IMR-90 (cell line): ENCODE measurements at regions of chr6 and their contacts with region 1.

Region 1: GRCh38 chr6:4319981-4320683 is 184.8 kb upstream of the ECI2 start:
- DNase-seq: peak; percentile 65
- ATAC-seq: peak; percentile 8
- H3K4me3 ChIP-seq: no peak overlapping the region
- H3K27ac ChIP-seq: peak overlapping the region; percentile 78; the same call in 1 of the 2 replicates
- H3K4me1 ChIP-seq: peaks cover 24% of the 10 kb centered on the region
- H3K27me3 ChIP-seq: no peaks in the 10 kb centered on the region
- CTCF ChIP-seq: no peak
- POLR2A ChIP-seq: no peak
- RAD21 ChIP-seq: no peak

Region 2: DNA sequence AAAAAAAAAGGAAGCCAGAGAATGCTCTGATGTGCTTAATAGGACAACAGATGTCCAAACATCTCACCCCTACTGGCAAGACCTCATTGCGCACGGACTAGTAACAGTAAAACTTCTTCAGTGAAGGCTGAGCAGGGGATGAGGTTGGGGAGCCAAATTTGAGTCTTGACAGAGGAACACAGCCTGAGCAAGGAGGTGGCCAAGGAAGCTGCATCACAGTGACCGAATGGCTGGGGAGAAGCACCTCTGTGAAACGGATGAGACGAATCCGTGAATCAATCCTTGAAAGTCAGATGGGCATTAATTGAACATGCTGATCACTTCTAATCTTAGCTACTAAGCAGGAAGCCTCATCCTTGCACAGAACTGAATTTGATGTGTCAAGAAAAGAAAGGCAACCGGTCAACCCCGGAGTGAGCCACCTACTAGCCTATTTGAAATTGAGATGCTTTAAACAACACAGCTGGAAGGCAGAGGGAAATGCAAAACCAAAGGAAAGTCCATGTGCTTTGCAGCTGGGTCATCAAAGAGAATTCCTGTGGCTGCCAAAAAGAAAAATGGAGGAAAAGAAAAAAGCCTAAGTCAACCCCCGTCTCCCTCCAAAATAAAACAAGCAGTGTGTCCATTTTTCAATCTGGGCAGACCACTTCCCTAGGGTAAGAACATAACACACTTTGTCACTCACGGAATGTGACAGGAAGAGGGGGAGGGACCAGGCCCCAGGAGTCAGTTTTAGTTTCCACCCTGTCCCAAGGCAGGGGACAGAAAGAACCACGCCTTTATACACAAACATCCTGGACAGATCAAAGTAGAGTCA is 598.1 kb before region 1 on chr6:
- CTCF ChIA-PET with region 1: no interaction called
- POLR2A ChIA-PET with region 1: no interaction called
- dilution Hi-C with region 1: no loop called
- in situ Hi-C with region 1: no loop called
- intact Hi-C with region 1: no loop called
- DNase-seq: peak; percentile 51
- ATAC-seq: no peak
- H3K4me3 ChIP-seq: no peak overlapping the region
- H3K27ac ChIP-seq: no peak overlapping the region
- H3K4me1 ChIP-seq: no peaks in the 10 kb centered on the region
- H3K27me3 ChIP-seq: no peaks in the 10 kb centered on the region
- CTCF ChIP-seq: no peak
- POLR2A ChIP-seq: no peak
- RAD21 ChIP-seq: no peak

Region 3: DNA sequence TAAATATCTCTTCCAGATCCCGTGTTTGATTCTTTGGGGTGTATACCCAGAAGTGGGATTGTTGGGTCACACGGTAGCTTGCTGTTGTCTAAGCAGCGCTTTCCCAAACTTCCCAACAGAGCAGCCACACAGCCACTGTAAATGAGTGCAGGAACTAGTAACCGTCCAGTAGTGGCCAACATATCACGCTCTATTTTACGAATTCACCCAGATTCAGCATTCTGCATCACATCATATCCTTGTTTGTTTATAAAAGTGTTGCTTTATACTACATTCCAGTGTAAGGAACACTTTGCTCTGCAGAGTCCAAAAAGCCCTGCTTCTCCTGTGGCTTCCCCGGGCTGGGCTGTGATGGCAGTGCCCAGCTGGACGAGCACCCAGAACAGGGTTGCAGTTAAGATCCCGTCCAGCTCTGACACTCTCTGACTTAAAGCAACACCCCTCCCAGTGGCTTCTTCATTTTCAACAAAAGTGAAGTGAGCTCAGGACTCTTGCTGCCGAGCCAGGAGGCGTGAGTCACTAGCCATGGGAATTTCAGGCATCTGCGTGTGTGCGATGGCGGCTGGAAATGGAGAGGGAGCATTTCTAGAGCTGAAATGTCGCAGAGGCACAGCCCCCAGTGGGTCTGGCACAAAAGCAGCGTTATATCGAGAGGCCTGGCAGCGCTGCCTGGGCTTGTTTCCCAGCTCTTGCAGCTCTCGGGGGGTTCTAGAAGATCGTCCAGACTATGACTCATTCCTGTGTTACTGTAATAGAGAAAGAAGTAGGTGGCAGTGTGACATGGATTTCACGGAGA is 31.6 kb after region 1 on chr6:
- CTCF ChIA-PET with region 1: interaction called, 3 read pairs
- POLR2A ChIA-PET with region 1: no interaction called
- dilution Hi-C with region 1: no loop called
- in situ Hi-C with region 1: no loop called
- intact Hi-C with region 1: loop called (anchors 1 kb)
- DNase-seq: peak; percentile 95
- ATAC-seq: peak; percentile 79
- H3K4me3 ChIP-seq: peak overlapping the region; percentile 12
- H3K27ac ChIP-seq: peak overlapping the region; percentile 59
- H3K4me1 ChIP-seq: peaks cover 27% of the 10 kb centered on the region
- H3K27me3 ChIP-seq: no peaks in the 10 kb centered on the region
- CTCF ChIP-seq: 0 out of 2 replicates have a peak, but pooled peaks have one; percentile 2
- POLR2A ChIP-seq: peak; percentile 62; the same call in 1 of the 2 replicates
- RAD21 ChIP-seq: no peak; the same call in none of the 2 replicates

Region 4: GRCh38 chr6:4581796-4582385 is 261.8 kb after region 1 on chr6:
- CTCF ChIA-PET with region 1: no interaction called
- POLR2A ChIA-PET with region 1: no interaction called
- dilution Hi-C with region 1: no loop called
- in situ Hi-C with region 1: no loop called
- intact Hi-C with region 1: loop called (anchors 2 kb)
- DNase-seq: peak; percentile 95
- ATAC-seq: peak; percentile 90
- H3K4me3 ChIP-seq: no peak overlapping the region
- H3K27ac ChIP-seq: peak overlapping the region; percentile 87
- H3K4me1 ChIP-seq: peaks cover 19% of the 10 kb centered on the region
- H3K27me3 ChIP-seq: no peaks in the 10 kb centered on the region
- CTCF ChIP-seq: no peak
- POLR2A ChIP-seq: no peak
- RAD21 ChIP-seq: peak; percentile 1; the same call in 1 of the 2 replicates